ENCODE measurements at regions of chr16 and their contacts with region 1.

Region 1: GRCh38 chr16:71626018-71626857 is at the start of gene MARVELD3:
- DNase-seq: peak; percentile 97
- ATAC-seq: peak; percentile 65
- H3K4me3 Mint-ChIP-seq: peak within 1 kb of the TSS; percentile 89
- H3K27ac Mint-ChIP-seq: peak within 1 kb of the TSS; percentile 76; the same call in 1 of the 2 replicates
- H3K4me1 Mint-ChIP-seq: peaks cover 24% of the 10 kb centered on the region
- H3K27me3 Mint-ChIP-seq: no peaks in the 10 kb centered on the region; the same call in 1 of the 2 replicates
- CTCF ChIP-seq: no peak
- total RNA-seq, gene MARVELD3: 29.2 to 31.0 TPM (median 30.0 TPM) in 3 replicates

Region 2: DNA sequence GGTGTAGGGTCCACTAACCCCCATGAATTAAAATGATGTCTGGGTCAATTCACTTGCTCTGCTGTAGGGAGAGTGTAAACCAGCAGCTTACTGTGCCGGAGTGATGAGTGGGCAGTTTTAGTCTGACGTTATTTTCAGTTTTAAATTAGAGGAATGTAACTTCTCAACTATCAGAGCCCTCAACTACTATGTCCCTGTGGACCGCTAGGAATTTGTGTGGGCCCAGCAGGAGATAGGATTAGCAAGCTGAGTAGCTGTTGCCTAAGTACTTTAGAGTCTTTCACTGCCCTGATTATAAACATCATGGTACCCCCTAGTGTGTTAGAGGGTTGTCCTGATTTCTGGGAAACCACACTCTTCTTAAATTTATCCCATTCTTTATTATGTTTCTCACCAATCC is 11.2 kb after region 1 on chr16:
- CTCF ChIA-PET with region 1: interaction called, 10 read pairs
- POLR2A ChIA-PET with region 1: no interaction called
- DNase-seq: peak; percentile 38
- ATAC-seq: peak; percentile 81
- H3K4me3 Mint-ChIP-seq: no peak overlapping the region
- H3K27ac Mint-ChIP-seq: peak overlapping the region; percentile 32
- H3K4me1 Mint-ChIP-seq: peaks cover 18% of the 10 kb centered on the region
- H3K27me3 Mint-ChIP-seq: no peaks in the 10 kb centered on the region
- CTCF ChIP-seq: no peak

Measured in WTC11 (cell line).